Posterior vena cava (tissue), 2 donors: ENCODE measurements at regions of chr16 and their contacts with region 1.

Region 1: GRCh38 chr16:66740010-66740409 is 11.4 kb downstream of the DYNC1LI2 start:
- DNase-seq: no peak

Region 2: GRCh38 chr16:66698046-66698445 is 42.0 kb before region 1 on chr16:
- intact Hi-C with region 1: loop called in 1 of 2 experiments (anchors 1 kb)
- DNase-seq: no peak

Region 3: GRCh38 chr16:66858740-66859396 is 118.9 kb after region 1 on chr16:
- intact Hi-C with region 1: loop called in 1 of 2 experiments (anchors 10 kb)
- DNase-seq: peak; percentile 76

Region 4: GRCh38 chr16:67146523-67147357 is 406.7 kb after region 1 on chr16:
- intact Hi-C with region 1: loop called in 1 of 2 experiments (anchors 10 kb)
- DNase-seq: no peak